Activated CD4-positive, alpha-beta T cell treated with anti-CD3 and anti-CD28 coated beads for 36 hours (primary cell): ENCODE measurements at regions of chr6 and their contacts with region 1.

Region 1: DNA sequence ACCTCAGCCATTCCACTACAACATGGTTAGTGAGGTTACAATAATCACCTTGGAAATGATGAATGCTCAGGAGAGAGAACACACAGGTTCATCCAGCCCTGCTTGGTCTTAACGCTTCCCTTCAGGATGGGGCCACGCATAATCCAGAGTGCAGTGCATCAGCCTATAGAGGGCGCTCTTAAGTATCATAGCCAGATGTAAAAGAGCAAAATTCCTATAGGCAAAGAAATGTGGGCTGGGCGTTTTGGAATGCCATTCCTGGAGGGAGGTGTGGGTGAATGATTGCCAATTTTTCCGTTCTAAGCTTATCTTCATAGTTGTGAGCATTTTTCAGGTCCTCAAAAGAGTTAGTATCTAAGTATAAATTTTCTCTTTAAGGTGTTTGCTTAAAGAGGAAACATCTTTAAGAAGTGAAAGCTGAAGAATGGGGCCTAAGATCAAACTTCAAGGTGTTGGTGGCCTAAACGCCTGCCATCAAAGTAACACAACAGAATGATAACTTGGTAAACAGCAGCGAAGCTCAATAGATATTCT is 1.8 kb downstream of the RIPOR2 start:
- DNase-seq: peak; percentile 59
- ATAC-seq: no peak
- H3K4me3 Mint-ChIP-seq: peak overlapping the region; percentile 93
- H3K27ac Mint-ChIP-seq: peak overlapping the region; percentile 95
- H3K4me1 Mint-ChIP-seq: peaks cover 88% of the 10 kb centered on the region
- H3K27me3 Mint-ChIP-seq: no peaks in the 10 kb centered on the region

Region 2: DNA sequence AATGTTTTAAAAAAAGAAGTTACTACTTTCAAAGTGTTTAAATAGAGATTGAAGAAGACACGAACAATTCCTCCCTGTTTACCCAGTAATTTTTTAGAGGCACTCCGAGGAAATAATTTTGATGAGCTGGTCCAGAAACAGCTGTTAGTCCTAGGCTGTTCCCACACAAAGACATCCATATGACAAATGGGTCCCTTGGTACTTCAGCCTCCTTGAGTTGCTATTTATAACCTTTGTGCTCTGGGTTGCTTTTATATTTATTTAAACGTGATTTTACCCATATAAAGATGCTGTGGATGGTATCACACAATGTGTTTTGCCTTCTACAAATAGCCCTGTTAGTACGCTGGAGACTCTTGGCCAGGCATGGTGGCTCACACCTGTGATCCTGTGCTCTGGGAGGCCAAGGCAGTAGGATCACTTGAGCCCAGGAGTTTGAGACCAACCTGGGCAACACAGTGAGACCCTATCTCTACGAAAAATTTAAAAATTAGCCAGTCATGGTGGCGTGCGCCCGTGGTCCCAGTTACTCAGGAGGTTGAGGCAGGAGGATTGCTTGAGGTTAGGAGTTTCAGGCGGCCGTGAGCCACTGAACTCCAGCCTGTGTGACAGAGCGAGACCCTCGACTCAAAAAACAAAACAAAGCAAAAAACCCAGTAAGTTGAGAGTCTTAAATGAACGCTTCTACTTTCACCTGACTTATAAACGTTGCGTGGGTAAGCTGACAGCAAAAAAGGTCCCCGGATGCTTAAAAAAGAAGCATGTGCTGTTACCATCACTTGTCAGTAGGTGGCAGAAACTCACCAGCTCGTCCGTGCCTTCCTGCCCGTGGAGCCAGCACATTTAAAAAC is 78.3 kb before region 1 on chr6:
- CTCF ChIA-PET with region 1: interaction called, 102 read pairs
- POLR2A ChIA-PET with region 1: interaction called, 5 read pairs
- intact Hi-C with region 1: loop called (anchors 1 to 2 kb)
- DNase-seq: peak; percentile 79
- ATAC-seq: peak; percentile 61
- H3K4me3 Mint-ChIP-seq: peak overlapping the region; percentile 46
- H3K27ac Mint-ChIP-seq: peak overlapping the region; percentile 90
- H3K4me1 Mint-ChIP-seq: peaks cover 52% of the 10 kb centered on the region
- H3K27me3 Mint-ChIP-seq: no peaks in the 10 kb centered on the region

Region 3: DNA sequence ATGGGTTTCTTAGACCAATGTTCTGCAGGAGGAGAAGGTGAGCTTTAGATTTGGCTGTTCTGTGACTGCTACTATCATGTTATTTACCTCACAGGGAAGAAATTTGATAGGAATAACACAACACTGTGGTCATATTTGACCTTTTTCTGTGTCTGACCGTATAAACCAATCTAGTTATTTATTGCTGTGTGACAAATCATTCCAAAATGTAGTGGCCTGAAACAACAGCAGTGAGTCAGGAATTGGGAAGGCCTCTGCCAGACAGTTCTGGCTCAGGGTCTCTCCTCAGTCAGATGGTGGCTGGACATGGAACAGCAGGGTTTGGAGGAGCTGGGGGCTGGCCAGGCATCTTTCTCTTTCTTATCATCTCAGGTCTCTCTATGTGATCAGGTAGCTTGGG is 31.2 kb before region 1 on chr6:
- CTCF ChIA-PET with region 1: interaction called, 135 read pairs
- POLR2A ChIA-PET with region 1: no interaction called
- intact Hi-C with region 1: no loop called
- DNase-seq: no peak
- ATAC-seq: no peak
- H3K4me3 Mint-ChIP-seq: no peak overlapping the region
- H3K27ac Mint-ChIP-seq: peak overlapping the region; percentile 78
- H3K4me1 Mint-ChIP-seq: peaks cover 92% of the 10 kb centered on the region
- H3K27me3 Mint-ChIP-seq: no peaks in the 10 kb centered on the region

Region 4: DNA sequence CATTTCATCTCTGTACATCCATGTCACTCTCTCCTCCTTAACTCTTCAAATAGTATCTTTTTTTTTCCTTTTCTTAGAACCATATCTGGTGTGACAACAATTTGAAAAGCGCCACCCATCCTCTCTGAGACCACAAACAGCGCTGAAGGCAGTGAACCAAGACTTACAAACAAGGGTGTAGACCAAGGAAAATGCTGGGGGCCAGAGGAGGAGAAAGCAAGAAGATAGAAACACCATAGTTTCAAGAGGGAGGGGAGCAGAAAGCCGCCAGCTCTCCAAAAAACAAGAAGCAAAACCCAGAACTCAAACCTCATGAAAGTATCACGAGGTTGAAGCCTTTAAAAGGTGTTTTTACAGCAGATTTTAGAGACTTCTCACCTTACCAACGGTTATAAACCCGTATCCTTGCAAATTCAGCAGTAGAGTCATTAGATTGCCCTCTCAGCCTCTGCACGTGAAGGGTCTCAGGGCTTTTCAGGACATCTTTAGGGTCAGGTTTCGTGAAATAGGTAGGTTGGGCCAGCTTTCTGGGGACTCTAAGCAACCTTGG is 15.2 kb after region 1 on chr6:
- CTCF ChIA-PET with region 1: interaction called, 105 read pairs
- POLR2A ChIA-PET with region 1: interaction called, 8 read pairs
- intact Hi-C with region 1: loop called in 1 of 2 experiments (anchors 1 kb)
- DNase-seq: peak; percentile 44
- ATAC-seq: peak; percentile 30
- H3K4me3 Mint-ChIP-seq: peak overlapping the region; percentile 16
- H3K27ac Mint-ChIP-seq: peak overlapping the region; percentile 84
- H3K4me1 Mint-ChIP-seq: peaks cover 68% of the 10 kb centered on the region
- H3K27me3 Mint-ChIP-seq: no peaks in the 10 kb centered on the region

Region 5: DNA sequence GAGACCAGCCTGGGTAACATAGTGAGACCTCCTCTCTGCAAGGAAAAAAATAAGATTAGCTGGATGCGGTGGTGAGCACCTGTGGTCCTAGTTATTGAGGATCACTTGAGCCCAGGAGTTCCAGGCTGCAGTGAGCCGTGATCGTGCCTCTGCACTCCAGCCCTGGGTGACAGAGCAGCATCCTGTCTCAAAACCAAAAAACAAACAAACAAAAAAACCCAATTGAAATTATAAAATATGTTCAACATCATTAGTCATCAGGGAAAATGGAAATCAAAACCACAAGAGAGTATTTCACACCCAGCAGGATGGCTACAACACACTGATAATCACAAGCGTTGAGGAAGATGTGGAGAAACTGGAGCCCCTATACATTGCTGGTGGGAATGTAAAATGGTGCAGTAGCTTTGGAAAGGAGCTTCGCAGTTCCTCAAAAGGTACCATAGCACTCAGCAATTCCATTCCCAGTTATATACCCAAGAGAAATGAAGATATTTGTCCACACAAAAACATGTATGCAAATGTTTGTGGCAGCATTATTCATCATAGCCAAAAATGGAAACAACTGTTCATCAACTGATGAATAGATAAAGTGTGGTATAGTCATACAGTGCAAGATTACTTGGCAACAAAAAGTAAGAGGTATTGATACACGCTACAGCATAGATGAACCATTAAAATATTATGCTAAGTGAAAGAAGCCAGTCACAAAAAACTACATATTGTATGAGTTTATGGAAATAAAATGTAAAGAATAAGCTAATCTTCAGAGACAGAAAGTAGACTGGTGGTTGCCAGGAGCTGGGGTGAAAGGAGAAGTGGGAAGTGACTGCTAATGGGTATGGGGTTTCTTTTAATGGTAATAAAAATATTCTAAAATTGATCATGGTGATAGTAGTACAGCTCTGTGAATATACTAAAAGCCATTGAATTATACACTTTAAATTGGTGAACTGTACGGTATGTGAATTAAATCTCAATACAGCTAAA is 40.5 kb after region 1 on chr6:
- CTCF ChIA-PET with region 1: interaction called, 12 read pairs
- POLR2A ChIA-PET with region 1: interaction called, 6 read pairs
- intact Hi-C with region 1: loop called (anchors 1 kb)
- DNase-seq: peak; percentile 60
- ATAC-seq: peak; percentile 92
- H3K4me3 Mint-ChIP-seq: peak overlapping the region; percentile 33
- H3K27ac Mint-ChIP-seq: peak overlapping the region; percentile 86
- H3K4me1 Mint-ChIP-seq: peaks cover 59% of the 10 kb centered on the region
- H3K27me3 Mint-ChIP-seq: no peaks in the 10 kb centered on the region

Region 6: DNA sequence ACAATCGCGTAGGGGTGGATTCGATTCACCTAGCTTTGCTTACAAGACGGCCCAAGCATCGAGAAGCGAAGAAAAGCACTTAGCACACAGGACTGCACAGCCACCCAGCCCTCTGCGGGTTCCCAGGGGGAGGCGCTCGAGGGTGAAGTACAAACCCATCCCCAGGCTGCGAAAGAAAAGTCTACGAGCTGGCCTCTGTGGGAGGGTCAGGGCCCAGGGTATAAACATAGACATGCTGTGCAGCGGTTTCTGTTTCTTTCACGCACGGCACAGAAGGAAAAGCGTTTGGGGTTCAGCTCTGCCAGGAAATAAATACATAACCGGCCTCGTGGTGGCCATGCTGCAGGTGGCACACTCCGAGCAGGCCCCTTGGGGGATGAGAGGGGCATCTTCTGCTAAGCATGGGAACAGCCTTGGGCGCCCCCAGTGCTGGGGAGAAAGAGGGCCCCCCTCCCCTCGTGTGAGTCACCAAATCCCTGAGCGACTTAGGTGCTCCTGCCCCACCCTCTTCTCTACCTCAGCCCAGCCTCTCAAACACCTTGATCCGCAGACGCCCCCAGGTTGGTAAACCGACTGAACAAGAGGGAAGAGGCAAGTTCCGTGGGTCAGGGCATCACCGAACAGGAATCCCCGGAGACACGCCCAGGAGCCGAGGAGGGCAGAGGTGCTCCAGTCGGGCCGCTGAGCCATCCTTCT is 93.4 kb after region 1 on chr6:
- CTCF ChIA-PET with region 1: interaction called, 36 read pairs
- POLR2A ChIA-PET with region 1: interaction called, 3 read pairs
- intact Hi-C with region 1: no loop called
- DNase-seq: peak; percentile 90
- ATAC-seq: peak; percentile 95
- H3K4me3 Mint-ChIP-seq: peak overlapping the region; percentile 62
- H3K27ac Mint-ChIP-seq: peak overlapping the region; percentile 77
- H3K4me1 Mint-ChIP-seq: peaks cover 51% of the 10 kb centered on the region
- H3K27me3 Mint-ChIP-seq: no peaks in the 10 kb centered on the region